ENCODE measurements at regions of chr2 and their contacts with region 1.

Region 1: DNA sequence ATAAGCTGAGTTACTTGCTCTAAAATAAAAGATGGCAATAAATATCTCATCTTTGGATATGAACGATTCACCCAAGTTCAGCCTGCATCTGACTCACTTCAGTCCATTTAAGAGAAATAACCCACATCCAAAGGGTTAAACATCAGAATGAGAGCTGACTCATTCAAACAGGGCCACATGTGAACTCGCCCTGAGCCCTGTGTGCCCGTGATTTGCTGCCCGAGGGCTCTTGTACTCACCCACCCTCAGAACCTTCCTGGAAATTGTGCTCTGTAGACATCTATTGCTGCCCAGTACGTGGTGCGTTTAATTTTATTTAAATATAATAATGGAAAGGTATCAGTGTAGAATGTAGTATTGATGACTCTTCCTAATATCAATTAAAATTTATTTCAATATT is 66.9 kb upstream of the RBM44 start:
- DNase-seq: no peak
- ATAC-seq: no peak

Region 2: DNA sequence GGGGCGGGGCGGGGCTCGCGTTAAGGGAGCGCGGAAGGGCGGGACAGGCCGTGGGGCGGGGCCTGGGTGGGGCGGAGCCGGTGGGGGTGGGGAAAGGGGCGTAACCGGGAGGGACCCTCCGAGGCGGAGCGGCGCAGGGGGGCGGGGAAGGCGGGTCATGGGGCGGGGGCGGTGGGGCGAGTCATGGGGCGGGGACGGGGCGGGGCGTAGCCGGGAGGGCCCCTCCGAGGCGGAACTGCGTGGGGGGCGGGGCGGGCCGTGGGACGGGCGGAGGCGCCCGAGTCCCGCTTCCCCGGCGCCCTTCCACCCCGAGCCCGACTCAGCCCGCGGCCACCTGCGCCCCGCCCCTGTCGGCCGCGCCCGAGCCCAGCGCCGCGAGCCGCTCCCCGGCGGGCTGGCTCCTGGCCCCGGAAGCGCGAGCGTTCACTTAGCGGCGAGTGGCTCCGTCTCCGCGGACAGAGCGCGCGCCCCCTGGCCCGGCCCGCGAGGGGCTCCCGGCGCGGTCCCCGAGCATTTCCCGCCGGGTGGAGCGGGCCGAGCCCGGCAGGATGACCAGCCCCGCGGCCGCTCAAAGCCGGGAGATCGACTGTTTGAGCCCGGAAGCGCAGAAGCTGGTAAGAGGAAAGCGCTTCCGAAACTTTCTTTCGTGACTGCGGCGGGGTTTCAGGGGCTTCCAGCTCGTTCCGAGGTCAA is 39.6 kb before region 1 on chr2:
- intact Hi-C with region 1: loop called (anchors 5 kb)
- DNase-seq: no peak
- ATAC-seq: peak; percentile 78

Region 3: DNA sequence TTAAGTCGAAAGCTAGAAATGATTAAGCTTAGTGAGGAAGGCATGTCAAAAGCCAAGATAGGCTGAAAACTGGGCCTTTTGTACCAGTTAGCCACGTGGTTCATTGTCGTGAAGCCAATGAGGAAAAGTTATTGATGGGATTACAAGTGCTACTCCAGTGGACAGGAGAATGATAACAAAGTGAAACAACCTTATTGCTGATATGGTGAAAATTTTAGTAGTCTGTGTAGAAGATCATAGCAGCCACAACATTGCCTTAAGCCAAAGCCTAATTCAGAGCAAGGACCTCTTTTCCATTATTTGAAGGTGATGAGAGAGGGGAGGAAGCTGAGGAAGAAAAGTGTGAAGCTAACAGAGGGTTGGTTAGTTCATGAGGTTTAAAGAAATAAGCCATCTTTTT is 103.7 kb after region 1 on chr2:
- intact Hi-C with region 1: no loop called
- DNase-seq: no peak
- ATAC-seq: no peak

Region 4: DNA sequence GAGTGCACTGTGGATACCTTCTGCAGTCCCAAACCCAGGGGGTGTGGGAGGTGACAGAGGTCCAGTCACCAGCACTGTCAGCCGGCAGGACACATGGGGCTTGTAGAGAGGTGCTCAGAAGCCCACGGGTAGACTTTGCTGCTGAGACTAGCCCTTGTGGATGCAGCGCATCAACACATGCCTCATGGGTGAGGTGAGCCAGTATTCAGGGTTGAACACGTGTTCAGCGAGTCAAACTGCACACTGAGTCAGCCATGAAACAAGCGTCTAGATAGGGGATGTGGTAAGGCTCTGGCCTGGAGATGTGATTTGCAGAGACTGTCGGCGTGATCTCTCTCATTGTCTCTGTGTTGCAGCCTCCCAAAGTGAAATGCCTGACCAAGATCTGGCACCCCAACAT is 293.3 kb after region 1 on chr2:
- intact Hi-C with region 1: no loop called
- DNase-seq: no peak
- ATAC-seq: no peak